Naive thymus-derived CD8-positive, alpha-beta T cell (primary cell): ENCODE measurements at regions of chr16 and their contacts with region 1.

Region 1: DNA sequence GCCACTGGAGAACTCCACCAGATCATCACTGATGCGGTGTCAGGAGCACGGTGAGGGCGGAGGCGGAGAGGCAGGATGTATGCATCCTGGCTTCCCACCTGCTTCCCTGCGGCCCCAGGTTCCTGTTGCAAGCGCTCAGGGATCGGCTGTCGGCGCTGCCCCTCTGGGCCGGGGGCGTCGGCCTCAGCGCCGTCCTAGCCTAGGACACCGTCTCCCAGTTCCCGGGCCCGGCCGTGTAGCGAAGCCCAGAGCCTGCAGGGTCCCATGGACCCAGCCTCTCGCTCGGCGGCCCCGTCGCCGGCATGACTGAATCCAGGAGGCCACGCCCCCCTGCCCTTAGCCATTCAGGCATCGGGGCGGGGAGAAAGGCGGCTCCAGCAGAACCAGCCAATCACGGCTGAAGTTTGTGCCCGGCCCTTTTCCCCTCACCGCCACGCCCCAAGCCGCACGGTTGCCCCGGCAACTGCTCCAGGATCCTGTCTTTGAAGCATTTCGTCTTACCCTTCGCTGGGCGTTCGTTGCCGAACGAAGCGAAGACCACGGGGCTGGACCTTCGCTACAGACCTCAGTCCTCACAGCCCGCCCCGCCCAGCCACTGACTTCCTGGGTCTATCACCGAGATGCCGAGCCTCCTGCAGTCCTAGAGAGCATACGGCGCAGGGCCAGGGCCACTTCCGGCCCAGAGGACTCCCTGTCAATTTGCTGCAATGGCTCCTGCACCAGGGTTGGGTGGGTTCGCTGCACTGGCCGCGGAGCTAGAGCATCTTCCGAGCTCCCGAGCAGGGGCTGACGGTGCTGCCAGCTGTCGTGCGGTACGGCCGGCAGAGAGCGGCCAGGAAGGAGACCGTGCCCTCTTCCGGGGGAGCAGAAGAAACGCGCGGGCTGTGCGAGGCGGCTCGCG is 10.6 kb upstream of the ZNF213 start:
- DNase-seq: peak; percentile 94 to 99 (median 97)
- ATAC-seq: peak; percentile 87 to 88
- H3K4me3 Mint-ChIP-seq: peak overlapping the region; percentile 94 to 98 (median 96)
- H3K27ac Mint-ChIP-seq: peak overlapping the region; percentile 91 to 99 (median 97)
- H3K4me1 Mint-ChIP-seq: peaks cover 20 to 55% (median 43%) of the 10 kb centered on the region in 4 donors
- H3K27me3 Mint-ChIP-seq: no peaks in the 10 kb centered on the region

Region 2: GRCh38 chr16:3074860-3075522 is 49.2 kb before region 1 on chr16:
- POLR2A ChIA-PET with region 1: interaction called, 278 read pairs
- DNase-seq: peak; percentile 37 to 93 (median 82)
- ATAC-seq: peak; percentile 91 to 96
- H3K4me3 Mint-ChIP-seq: peak overlapping the region; percentile 58 to 89 (median 82)
- H3K27ac Mint-ChIP-seq: peak overlapping the region; percentile 92 to 100 (median 98)
- H3K4me1 Mint-ChIP-seq: peaks cover 53 to 89% (median 87%) of the 10 kb centered on the region in 4 donors
- H3K27me3 Mint-ChIP-seq: no peaks in the 10 kb centered on the region

Region 3: DNA sequence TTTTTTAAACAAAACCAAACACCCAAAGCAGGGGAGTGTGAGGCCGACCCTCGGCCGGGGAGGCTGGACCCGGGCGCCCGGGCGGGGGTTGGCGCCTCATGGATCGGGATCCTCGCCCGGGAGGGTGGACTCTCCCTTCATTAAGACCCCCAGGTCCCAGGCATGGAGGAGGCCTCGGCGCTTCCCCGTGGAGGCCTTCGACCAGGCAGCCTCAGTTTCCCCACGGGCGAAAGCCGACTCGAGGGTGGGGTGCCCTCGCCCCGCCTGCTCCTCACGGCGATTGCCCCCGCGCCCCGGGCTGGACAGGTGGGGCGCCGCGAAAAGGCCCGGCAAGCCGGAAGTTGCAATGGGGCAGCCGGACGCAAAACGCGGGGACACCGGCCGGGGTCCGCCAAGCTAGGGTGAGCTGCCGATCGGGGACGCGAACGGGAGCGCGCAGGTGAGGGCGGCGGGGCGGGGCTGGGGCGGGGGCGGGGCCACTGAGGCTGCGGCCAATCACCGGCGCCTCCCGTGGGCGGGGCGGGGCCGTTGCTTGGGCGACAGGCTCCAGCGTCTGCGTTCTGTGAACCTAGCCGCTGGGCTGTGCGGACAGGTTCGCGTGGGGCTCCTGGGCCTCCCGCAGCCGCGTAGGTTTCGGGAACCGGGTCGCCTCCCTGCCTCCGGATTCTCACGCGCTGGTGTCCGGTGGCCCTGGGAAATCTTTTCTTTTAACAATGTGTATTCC is 17.9 kb before region 1 on chr16:
- POLR2A ChIA-PET with region 1: interaction called, 13 read pairs
- DNase-seq: peak; percentile 82 to 95 (median 88)
- ATAC-seq: peak; percentile 90 to 95
- H3K4me3 Mint-ChIP-seq: peak overlapping the region; percentile 78 to 93 (median 89)
- H3K27ac Mint-ChIP-seq: peak overlapping the region; percentile 81 to 96 (median 90)
- H3K4me1 Mint-ChIP-seq: peaks cover 15 to 41% (median 34%) of the 10 kb centered on the region in 4 donors
- H3K27me3 Mint-ChIP-seq: no peaks in the 10 kb centered on the region

Region 4: DNA sequence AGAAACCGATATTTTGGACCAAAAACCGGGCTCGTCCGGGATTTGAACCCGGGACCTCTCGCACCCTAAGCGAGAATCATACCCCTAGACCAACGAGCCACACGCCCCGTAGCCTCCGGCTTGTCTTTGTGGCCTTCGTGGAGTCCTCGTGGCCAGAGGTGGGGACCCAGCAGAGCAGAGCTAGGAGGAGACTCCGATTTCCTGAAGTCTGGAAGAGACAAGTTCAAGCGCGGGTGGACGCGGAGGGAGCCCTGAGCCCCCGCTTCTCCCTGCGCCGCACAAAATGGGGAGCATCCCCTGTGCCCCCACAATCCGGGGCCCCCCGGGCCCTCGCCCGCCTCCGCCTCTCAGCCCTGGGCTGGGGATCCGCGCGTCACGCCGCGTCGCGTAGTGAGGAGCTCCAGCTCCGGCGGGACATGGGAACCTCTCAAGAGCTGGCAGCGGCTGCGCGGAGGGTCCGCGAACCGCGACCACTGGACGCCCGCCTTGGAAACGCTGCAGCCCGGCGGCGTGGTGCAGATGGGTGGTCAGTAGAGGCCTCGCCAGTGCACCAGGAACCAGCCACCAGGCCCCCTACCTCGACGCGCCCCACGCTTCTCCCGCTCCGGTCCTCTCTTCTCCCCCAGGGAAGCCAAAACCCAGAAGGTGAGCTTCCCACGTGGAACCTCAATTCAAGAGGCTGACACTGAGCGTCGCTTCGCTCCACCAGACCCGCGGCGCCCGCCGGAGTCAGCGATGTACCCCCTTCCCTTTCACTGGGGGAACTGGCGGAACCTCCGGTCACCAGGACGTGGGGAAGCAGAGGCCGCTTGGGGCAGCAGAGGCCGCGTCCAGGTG is 58.6 kb after region 1 on chr16:
- POLR2A ChIA-PET with region 1: no interaction called
- DNase-seq: peak in 6 of 10 donors; percentile 15 to 79 (median 40)
- ATAC-seq: peak; percentile 50 to 65
- H3K4me3 Mint-ChIP-seq: peak overlapping the region; percentile 70 to 90 (median 84)
- H3K27ac Mint-ChIP-seq: peak overlapping the region in 5 of 10 donors; percentile 24 to 85 (median 73)
- H3K4me1 Mint-ChIP-seq: peaks cover 18 to 32% (median 25%) of the 10 kb centered on the region in 4 donors
- H3K27me3 Mint-ChIP-seq: peaks cover 38 to 83% (median 69%) of the 10 kb centered on the region in 5 donors

Region 5: DNA sequence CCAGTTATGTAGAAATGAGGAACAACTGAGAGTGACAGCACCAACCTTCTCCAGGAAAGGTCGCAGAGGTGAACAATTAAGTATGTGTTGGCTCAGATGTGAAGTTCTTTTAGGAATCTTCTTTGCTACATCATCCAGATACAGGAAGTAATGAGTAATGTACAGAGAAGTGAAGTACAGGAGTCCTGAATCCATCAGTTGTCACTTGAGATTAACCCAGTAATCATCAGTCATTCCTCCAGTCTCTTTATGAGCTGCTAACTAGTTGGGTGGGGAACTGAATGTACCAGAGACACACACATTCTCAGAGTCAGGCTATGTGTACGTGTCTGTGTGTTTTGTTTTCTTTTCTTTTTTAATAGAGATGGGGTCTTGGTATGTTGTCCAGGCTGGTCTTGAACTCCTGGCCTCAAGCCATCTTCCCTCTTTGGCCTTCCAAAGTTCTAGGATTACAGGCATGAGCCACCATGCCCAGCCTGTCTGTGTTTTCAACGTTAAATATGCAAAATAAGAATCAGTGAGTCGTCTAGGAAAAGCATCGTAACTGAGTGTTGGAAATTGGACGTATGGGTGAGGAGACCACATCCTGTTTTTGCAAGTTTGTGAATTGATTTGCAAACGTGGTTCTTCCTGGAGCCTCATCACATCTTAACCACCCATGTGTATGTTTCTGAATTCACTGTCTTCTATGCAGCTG is 90.8 kb after region 1 on chr16:
- POLR2A ChIA-PET with region 1: no interaction called
- DNase-seq: peak in 8 of 10 donors; percentile 34 to 89 (median 76)
- ATAC-seq: peak; percentile 88 to 92
- H3K4me3 Mint-ChIP-seq: peak overlapping the region; percentile 55 to 88 (median 80)
- H3K27ac Mint-ChIP-seq: peak overlapping the region; percentile 94 to 100 (median 99)
- H3K4me1 Mint-ChIP-seq: peaks cover 23 to 47% (median 42%) of the 10 kb centered on the region in 4 donors
- H3K27me3 Mint-ChIP-seq: no peaks in the 10 kb centered on the region